GM13976 (cell line): ENCODE measurements at regions of chr13 and their contacts with region 1.

Region 1: DNA sequence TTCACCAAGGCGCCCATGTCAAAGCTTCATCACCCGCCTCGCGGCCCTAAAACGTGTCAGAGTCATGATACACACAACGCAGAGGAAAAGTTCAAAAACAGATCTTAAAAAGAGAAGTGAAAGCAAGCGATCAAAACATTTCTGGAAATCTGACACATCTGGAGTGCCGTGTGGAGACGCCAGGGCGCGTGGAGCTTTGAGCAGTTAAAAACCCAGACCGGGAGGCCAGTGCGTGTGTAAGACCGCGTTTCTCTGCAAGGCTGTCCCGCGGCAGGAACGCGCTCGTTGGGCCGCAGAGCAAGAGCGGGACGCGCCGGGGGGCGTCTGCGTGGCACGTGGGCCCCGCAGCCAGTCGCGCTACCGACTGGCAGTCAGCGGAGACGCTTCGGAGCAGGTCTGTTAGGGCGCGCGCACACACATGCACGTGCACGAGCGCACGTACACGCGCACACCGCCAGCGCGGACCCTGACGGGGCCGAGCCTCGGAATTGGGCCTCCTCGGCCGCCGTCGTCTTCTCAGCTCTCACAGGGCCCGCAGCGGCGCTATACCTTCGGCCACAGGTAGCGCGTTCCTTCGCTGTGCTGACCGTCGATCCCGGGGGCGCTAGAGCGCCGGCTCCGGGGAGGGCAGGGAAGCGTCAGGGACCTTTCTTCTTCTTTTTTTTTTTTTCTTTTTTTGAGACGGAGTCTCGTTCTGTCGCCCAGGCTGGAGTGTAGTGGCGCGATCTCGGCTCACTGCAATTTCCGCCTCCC is 35.8 kb downstream of the RNF6 start:
- DNase-seq: peak; percentile 89
- CTCF ChIP-seq: peak; percentile 54

Region 2: GRCh38 chr13:26485786-26486185 is 299.5 kb after region 1 on chr13:
- in situ Hi-C with region 1: loop called (anchors 5 kb)
- DNase-seq: no peak
- CTCF ChIP-seq: no peak

Region 3: DNA sequence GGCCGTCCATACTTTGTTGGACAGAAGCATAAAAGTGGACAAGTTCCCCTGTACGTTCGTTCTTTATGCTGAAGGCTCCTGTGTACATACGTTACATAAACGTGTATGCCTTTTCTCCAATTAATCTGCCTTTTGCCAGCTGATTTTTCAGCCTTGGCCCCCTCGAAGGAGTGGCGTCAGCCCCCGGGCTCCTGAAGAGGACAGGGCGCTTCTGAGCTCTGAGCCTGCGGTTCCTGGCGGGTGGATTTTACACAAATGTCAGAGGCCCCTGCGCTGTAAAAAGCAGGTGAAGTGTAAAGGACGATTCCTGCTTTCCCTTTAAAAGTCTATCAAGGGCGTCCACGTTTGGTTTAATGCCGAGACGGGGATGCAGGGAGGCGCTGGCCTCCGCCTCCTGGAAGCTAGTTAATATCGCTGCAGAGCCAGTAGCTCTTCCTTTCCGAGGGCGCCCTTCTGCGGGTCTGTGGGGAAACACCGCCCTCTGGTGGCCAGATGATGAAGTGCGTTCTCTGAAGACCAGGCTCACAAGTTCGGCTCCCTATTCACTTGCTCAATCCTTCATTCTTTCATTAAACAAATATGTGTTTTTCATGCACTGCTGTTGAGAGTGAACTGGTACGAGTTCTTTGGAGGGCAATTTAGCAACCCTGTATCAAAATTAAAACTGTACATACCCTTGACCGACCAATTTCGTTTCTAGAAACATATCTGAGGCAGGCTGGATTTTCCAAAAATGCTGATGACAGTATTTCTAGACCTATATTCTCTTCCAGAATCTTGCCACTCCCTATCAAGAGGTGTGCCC is 512.3 kb after region 1 on chr13:
- in situ Hi-C with region 1: loop called (anchors 10 kb)
- DNase-seq: peak; percentile 88
- CTCF ChIP-seq: peak; percentile 93